ENCODE measurements at regions of chr16 and their contacts with region 1.

Region 1: GRCh38 chr16:67246934-67247697 is at the start of gene FHOD1:
- DNase-seq: peak; percentile 85 to 98 (median 92)
- ATAC-seq: peak; percentile 78 to 84 (median 81)
- H3K4me3 ChIP-seq: peak within 1 kb of the TSS; percentile 75 to 76
- H3K4me3 Mint-ChIP-seq: peak within 1 kb of the TSS; percentile 83 to 93 (median 88)
- H3K27ac ChIP-seq: peak within 1 kb of the TSS; percentile 88
- H3K27ac Mint-ChIP-seq: peak within 1 kb of the TSS; percentile 81
- H3K4me1 ChIP-seq: peaks cover 24 to 67% of the 10 kb centered on the region in 2 experiments
- H3K4me1 Mint-ChIP-seq: peaks cover 40 to 52% (median 45%) of the 10 kb centered on the region in 3 donors
- H3K27me3 ChIP-seq: peaks cover 10 to 14% of the 10 kb centered on the region in 2 experiments
- H3K27me3 Mint-ChIP-seq: peaks cover 0 to 9% of the 10 kb centered on the region in 2 donors
- total RNA-seq, gene FHOD1: 31.0 to 92.5 (median 66.2) TPM

Region 2: DNA sequence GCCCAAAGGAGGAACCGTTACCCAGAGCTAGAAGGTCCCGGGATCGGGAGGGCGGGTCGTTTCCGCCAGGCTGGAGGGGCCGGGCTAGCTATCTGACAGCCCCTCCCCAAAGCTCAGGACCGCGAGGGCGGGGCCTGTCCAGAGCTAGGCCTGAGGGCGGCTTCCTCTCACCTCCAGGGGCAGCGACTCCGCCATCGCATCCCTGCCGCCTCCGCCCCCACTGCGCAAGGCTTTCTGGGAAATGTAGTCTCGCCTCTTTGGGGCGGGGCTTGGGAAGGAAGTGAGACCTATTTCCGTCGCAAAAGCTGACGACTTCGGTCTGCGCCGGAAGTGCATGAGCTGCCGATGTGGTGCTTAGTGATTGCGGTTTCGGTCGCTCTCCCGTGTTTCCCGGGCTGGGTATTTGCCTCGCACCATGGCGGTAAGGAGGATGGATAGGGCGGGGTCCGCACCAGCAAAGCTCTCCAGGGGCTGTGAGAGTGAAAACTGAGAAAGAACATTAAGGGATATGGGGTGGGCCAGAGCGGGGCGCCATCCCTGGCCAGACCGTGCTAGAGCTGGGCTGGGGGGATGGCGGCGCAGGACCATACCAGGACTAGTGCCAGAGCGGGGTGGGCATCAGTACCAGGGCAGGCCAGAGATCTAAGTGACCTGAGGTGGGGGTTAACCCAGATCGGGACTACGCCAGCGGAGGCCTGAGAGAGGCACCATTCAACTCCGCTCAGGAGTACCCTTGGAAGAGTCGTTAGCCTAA is 20.1 kb before region 1 on chr16 and contains the start of gene TMEM208:
- CTCF ChIA-PET with region 1: interaction called in 1 of 2 experiments, 12 read pairs
- POLR2A ChIA-PET with region 1: interaction called in 1 of 2 experiments, 3 read pairs
- DNase-seq: peak; percentile 91 to 99 (median 95)
- ATAC-seq: peak; percentile 93 to 97 (median 96)
- H3K4me3 ChIP-seq: peak within 1 kb of the TSS; percentile 66 to 97
- H3K4me3 Mint-ChIP-seq: peak within 1 kb of the TSS; percentile 97 to 98 (median 97)
- H3K27ac ChIP-seq: peak within 1 kb of the TSS; percentile 55
- H3K27ac Mint-ChIP-seq: peak within 1 kb of the TSS; percentile 94 to 98
- H3K4me1 ChIP-seq: peaks cover 20 to 41% of the 10 kb centered on the region in 2 experiments
- H3K4me1 Mint-ChIP-seq: peaks cover 51 to 63% (median 58%) of the 10 kb centered on the region in 3 donors
- H3K27me3 ChIP-seq: peaks cover 0 to 2% of the 10 kb centered on the region in 2 experiments
- H3K27me3 Mint-ChIP-seq: no peaks in the 10 kb centered on the region
- total RNA-seq, gene TMEM208: 28.5 to 40.3 (median 34.8) TPM

Region 3: GRCh38 chr16:67260426-67261075 is 13.4 kb after region 1 on chr16:
- CTCF ChIA-PET with region 1: interaction called in 1 of 2 experiments, 10 read pairs
- POLR2A ChIA-PET with region 1: no interaction called
- DNase-seq: peak in 2 of 35 experiments; percentile 19 to 38
- ATAC-seq: no peak
- H3K4me3 ChIP-seq: no peak overlapping the region
- H3K4me3 Mint-ChIP-seq: no peak overlapping the region
- H3K27ac ChIP-seq: no peak overlapping the region
- H3K27ac Mint-ChIP-seq: no peak overlapping the region
- H3K4me1 ChIP-seq: no peaks in the 10 kb centered on the region
- H3K4me1 Mint-ChIP-seq: no peaks in the 10 kb centered on the region
- H3K27me3 ChIP-seq: peaks cover 0 to 52% of the 10 kb centered on the region in 2 experiments
- H3K27me3 Mint-ChIP-seq: peaks cover 23 to 24% of the 10 kb centered on the region in 2 donors

Region 4: GRCh38 chr16:67279296-67280089 is 32.4 kb after region 1 on chr16 and contains the start of gene PLEKHG4:
- CTCF ChIA-PET with region 1: no interaction called
- POLR2A ChIA-PET with region 1: no interaction called
- DNase-seq: peak; percentile 51 to 88 (median 74)
- ATAC-seq: peak; percentile 97 to 99 (median 97)
- H3K4me3 ChIP-seq: peak within 1 kb of the TSS; percentile 78 to 89
- H3K4me3 Mint-ChIP-seq: peak within 1 kb of the TSS; percentile 75 to 80 (median 77)
- H3K27ac ChIP-seq: peak within 1 kb of the TSS; percentile 52
- H3K27ac Mint-ChIP-seq: peak within 1 kb of the TSS; percentile 55 to 79
- H3K4me1 ChIP-seq: peaks cover 6 to 24% of the 10 kb centered on the region in 2 experiments
- H3K4me1 Mint-ChIP-seq: peaks cover 9 to 19% (median 16%) of the 10 kb centered on the region in 3 donors
- H3K27me3 ChIP-seq: no peaks in the 10 kb centered on the region
- H3K27me3 Mint-ChIP-seq: no peaks in the 10 kb centered on the region
- total RNA-seq, gene PLEKHG4: 19.4 to 27.5 (median 24.9) TPM

Region 5: DNA sequence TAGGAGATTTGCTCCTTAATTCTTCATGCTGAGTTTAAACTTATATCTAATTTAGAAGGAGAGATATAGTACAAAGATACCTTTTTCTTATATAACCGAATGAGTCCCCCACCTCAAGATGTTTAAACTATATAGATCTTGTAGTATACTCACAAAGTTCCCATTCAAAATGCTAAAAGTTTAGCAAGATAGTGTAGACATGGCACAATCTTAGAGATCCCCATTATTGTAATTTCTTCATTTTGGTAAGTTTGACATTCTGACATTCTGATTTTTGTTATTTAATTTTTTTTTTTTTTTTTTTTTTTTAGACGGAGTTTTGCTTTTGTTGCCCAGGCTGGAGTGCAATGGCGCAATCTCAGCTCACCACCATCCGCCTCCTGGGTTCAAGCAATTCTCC is 1962.6 kb after region 1 on chr16:
- CTCF ChIA-PET with region 1: no interaction called
- POLR2A ChIA-PET with region 1: no interaction called
- DNase-seq: no peak
- ATAC-seq: no peak
- H3K4me3 ChIP-seq: no peak overlapping the region
- H3K4me3 Mint-ChIP-seq: no peak overlapping the region
- H3K27ac ChIP-seq: no peak overlapping the region
- H3K27ac Mint-ChIP-seq: no peak overlapping the region
- H3K4me1 ChIP-seq: no peaks in the 10 kb centered on the region
- H3K4me1 Mint-ChIP-seq: peaks cover 0 to 10% (median 1%) of the 10 kb centered on the region in 3 donors
- H3K27me3 ChIP-seq: no peaks in the 10 kb centered on the region
- H3K27me3 Mint-ChIP-seq: no peaks in the 10 kb centered on the region